CD8-positive, alpha-beta memory T cell (primary cell): ENCODE measurements at regions of chr3 and their contacts with region 1.

Region 1: DNA sequence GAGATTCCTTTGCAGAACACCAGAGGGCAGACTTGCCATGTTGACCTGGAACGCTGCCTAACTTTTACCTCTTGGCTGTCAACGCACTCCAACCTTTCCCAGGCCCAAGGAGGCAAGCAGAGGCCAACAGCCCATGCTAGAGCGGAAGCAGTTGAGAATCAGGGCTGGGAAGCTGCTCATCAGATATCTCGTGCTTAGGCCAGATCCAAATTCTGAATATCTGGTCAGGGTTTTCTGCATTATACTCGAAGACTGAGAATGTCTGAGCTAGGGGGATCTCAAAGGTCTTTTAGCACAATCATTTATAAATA is 2.5 kb downstream of the XIRP1 start:
- DNase-seq: peak; percentile 31 to 64 (median 48)
- H3K4me3 ChIP-seq: no peak overlapping the region
- H3K4me3 Mint-ChIP-seq: no peak overlapping the region
- H3K27ac ChIP-seq: no peak overlapping the region
- H3K27ac Mint-ChIP-seq: peak overlapping the region in 4 of 8 donors; percentile 3 to 80 (median 60)
- H3K4me1 ChIP-seq: no peaks in the 10 kb centered on the region
- H3K4me1 Mint-ChIP-seq: peaks cover 4 to 7% (median 5%) of the 10 kb centered on the region in 3 donors
- H3K27me3 ChIP-seq: no peaks in the 10 kb centered on the region
- H3K27me3 Mint-ChIP-seq: no peaks in the 10 kb centered on the region

Region 2: DNA sequence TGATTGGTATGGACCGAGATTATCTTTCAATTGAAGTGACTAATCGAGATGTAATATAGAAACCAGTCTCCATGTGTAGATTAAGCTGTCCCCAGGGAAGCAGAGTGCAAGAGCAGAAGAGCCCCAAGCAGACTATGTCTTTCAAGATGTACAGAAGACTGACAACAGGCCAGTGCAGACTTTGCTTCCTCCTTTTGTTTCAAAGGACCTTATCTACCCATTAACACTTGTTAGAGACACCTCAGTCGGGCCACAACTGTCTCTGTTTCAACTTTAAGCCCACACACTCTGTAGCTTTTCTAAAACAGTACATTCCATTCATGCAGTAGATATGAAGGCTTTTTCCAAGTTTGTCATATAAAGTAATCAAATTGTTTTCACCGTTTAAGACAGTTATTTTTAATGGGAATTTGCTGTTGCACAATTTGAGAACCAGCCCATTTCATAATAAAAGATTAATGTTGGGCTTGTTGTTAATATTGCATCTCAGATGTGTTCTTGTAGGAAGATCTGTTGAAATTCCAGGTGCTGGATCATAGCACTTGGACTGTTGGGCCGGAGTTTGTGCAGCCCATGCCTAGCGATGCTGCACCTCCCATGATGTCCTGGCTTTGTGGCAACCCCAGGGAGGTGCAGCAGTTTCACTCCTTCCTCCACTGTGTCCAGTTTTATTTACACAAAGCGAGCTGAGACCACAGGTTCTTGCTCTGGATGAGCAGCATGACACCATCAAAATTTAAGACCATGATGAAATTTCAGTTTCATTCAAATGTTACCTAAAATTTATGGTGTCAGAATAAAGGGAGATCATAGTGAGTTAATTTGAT is 94.8 kb before region 1 on chr3:
- CTCF ChIA-PET with region 1: no interaction called
- POLR2A ChIA-PET with region 1: no interaction called
- DNase-seq: no peak
- H3K4me3 ChIP-seq: no peak overlapping the region
- H3K4me3 Mint-ChIP-seq: no peak overlapping the region
- H3K27ac ChIP-seq: no peak overlapping the region
- H3K27ac Mint-ChIP-seq: peak overlapping the region in 3 of 8 donors; percentile 26 to 41 (median 40)
- H3K4me1 ChIP-seq: no peaks in the 10 kb centered on the region
- H3K4me1 Mint-ChIP-seq: no peaks in the 10 kb centered on the region
- H3K27me3 ChIP-seq: no peaks in the 10 kb centered on the region
- H3K27me3 Mint-ChIP-seq: no peaks in the 10 kb centered on the region

Region 3: GRCh38 chr3:39202094-39202493 is 12.2 kb after region 1 on chr3:
- CTCF ChIA-PET with region 1: interaction called, 14 read pairs
- POLR2A ChIA-PET with region 1: no interaction called
- DNase-seq: no peak
- H3K4me3 ChIP-seq: no peak overlapping the region
- H3K4me3 Mint-ChIP-seq: no peak overlapping the region
- H3K27ac ChIP-seq: no peak overlapping the region
- H3K27ac Mint-ChIP-seq: peak overlapping the region in 1 of 8 donors; percentile 27
- H3K4me1 ChIP-seq: no peaks in the 10 kb centered on the region
- H3K4me1 Mint-ChIP-seq: no peaks in the 10 kb centered on the region
- H3K27me3 ChIP-seq: no peaks in the 10 kb centered on the region
- H3K27me3 Mint-ChIP-seq: peaks cover 19 to 33% of the 10 kb centered on the region in 2 donors